ENCODE measurements at regions of chr1 and their contacts with region 1.

Region 1: DNA sequence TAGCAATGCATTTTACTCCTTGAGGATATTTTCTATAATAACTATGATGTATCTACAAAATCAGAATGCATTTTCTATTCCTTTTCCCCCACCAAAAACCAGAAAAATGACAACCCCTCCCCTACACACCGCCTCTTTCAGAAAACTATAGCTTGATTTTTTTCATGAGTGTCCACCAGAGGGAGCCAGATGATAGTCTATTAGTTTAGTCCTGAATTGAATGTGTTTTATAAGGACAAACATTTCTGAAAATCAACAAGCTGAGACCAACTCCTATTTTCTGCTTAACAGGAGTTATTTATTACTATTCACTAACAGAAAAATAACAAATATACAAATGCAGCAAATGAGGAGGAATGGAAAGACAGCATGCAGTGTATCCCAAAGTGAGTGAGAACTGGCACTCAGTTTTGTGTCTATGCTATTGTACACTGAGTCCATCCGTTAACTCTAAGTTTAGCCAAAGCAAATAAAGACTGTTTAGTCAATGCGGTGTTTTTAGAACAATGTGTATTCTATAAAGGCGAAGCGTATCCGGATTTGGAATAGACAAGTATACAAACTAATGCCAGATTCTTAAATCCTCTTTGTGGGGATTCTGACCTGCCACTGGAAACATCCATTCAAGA is 182.6 kb downstream of the VAV3 start:
- DNase-seq: peak in 1 of 2 donors; percentile 86
- ATAC-seq: peak in 1 of 3 donors; percentile 45
- H3K4me3 ChIP-seq: no peak overlapping the region
- H3K4me3 Mint-ChIP-seq: no peak overlapping the region
- H3K27ac ChIP-seq: no peak overlapping the region
- H3K27ac Mint-ChIP-seq: peak overlapping the region; percentile 91 to 92
- H3K4me1 ChIP-seq: peaks cover 18% of the 10 kb centered on the region
- H3K4me1 Mint-ChIP-seq: peaks cover 50 to 55% of the 10 kb centered on the region in 2 donors
- H3K27me3 ChIP-seq: no peaks in the 10 kb centered on the region
- H3K27me3 Mint-ChIP-seq: no peaks in the 10 kb centered on the region
- CTCF ChIP-seq: peak; percentile 95

Region 2: GRCh38 chr1:107820805-107821204 is 38.5 kb after region 1 on chr1:
- intact Hi-C with region 1: loop called (anchors 1 kb)
- DNase-seq: no peak
- ATAC-seq: peak in 2 of 3 donors; percentile 57 to 61
- H3K4me3 ChIP-seq: no peak overlapping the region
- H3K4me3 Mint-ChIP-seq: peak overlapping the region; percentile 36
- H3K27ac ChIP-seq: peak overlapping the region; percentile 31
- H3K27ac Mint-ChIP-seq: peak overlapping the region; percentile 81 to 90
- H3K4me1 ChIP-seq: peaks cover 16% of the 10 kb centered on the region
- H3K4me1 Mint-ChIP-seq: peaks cover 67 to 68% of the 10 kb centered on the region in 2 donors
- H3K27me3 ChIP-seq: no peaks in the 10 kb centered on the region
- H3K27me3 Mint-ChIP-seq: no peaks in the 10 kb centered on the region
- CTCF ChIP-seq: no peak

Region 3: GRCh38 chr1:107870696-107871095 is 88.4 kb after region 1 on chr1:
- intact Hi-C with region 1: loop called (anchors 2 kb)
- DNase-seq: no peak
- ATAC-seq: peak in 1 of 3 donors; percentile 52
- H3K4me3 ChIP-seq: no peak overlapping the region
- H3K4me3 Mint-ChIP-seq: peak overlapping the region; percentile 49
- H3K27ac ChIP-seq: peak overlapping the region; percentile 76
- H3K27ac Mint-ChIP-seq: peak overlapping the region; percentile 89 to 91
- H3K4me1 ChIP-seq: peaks cover 30% of the 10 kb centered on the region
- H3K4me1 Mint-ChIP-seq: peaks cover 70 to 87% of the 10 kb centered on the region in 2 donors
- H3K27me3 ChIP-seq: no peaks in the 10 kb centered on the region
- H3K27me3 Mint-ChIP-seq: no peaks in the 10 kb centered on the region
- CTCF ChIP-seq: no peak

Region 4: DNA sequence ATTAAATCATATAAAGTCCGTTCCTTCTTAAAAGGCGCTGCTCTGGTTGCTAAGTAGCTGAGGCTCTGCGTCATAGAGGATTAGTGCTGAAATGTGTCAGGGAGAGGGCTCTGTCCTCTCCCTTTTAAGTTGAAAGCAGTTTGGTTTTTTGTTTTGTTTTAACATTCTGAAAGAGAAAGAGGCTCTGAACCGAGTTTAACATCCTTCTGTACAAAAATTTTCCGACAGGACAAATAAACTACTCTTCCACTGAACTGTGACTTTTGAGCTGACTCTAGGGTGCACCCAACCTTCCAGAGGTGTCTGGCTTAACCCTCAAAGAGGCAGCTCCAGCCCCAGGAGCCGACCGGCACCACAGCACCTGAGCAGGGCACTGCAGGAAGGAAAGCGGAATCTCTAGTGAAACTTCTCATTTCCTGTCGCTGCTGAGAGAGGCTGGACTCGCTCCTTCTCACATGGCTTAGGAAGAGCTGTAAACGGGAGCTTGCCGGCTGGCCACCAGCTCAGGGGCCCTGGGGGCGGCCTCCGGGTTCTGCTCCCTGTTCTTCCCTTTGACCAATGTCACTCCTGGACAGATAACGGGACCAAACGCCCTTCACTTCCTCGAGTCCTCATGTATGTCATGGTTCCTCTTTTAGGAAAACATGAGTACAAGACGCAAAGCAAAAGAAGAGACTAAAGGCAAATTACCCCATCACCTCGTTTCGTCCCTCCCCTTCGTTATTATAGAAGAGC is 181.4 kb after region 1 on chr1:
- intact Hi-C with region 1: loop called (anchors 1 kb)
- DNase-seq: peak; percentile 47 to 75
- ATAC-seq: peak; percentile 69 to 82 (median 70)
- H3K4me3 ChIP-seq: peak overlapping the region; percentile 84
- H3K4me3 Mint-ChIP-seq: peak overlapping the region; percentile 98
- H3K27ac ChIP-seq: peak overlapping the region; percentile 83
- H3K27ac Mint-ChIP-seq: peak overlapping the region; percentile 95 to 97
- H3K4me1 ChIP-seq: peaks cover 18% of the 10 kb centered on the region
- H3K4me1 Mint-ChIP-seq: peaks cover 47 to 55% of the 10 kb centered on the region in 2 donors
- H3K27me3 ChIP-seq: no peaks in the 10 kb centered on the region
- H3K27me3 Mint-ChIP-seq: no peaks in the 10 kb centered on the region
- CTCF ChIP-seq: no peak

Region 5: DNA sequence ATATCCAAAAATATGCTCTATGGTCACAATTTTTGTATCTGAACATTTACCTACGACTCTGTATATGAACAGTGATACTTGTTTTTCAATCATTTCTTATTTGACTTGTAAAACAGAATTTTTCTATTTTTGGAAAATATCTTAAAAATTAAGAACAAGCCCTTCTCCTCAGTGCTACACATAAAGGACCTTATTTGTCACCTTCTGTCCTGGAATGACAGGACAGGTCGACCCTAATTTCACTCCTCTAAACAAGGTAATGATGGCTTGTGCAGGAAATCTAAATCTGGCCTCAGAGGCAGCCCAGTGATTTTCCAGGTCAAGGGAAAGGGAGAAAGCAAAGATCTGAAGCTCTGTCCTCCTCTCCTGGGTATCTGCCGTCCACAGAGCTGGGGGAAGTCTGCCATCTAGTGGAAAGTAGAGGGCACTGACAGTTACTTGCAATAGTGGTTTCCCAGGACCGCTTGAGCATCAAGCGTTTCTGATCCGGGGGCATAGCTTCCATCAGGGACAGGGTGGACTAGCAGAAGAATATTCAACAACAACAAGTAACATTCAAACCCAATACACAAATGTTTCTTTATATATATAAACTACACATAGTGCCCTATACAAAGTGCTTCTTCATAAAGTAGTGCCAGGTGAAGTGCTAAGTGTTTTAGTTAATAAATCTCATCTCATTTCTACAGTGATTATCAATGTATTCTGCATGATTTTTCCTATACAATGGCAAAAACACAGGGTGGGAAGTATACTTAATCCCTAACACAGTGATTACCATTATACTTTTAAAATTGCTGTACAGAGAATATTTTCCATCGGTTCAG is 343.2 kb after region 1 on chr1:
- intact Hi-C with region 1: loop called (anchors 1 kb)
- DNase-seq: peak; percentile 48 to 88
- ATAC-seq: peak; percentile 91 to 100 (median 99)
- H3K4me3 ChIP-seq: no peak overlapping the region
- H3K4me3 Mint-ChIP-seq: no peak overlapping the region
- H3K27ac ChIP-seq: no peak overlapping the region
- H3K27ac Mint-ChIP-seq: peak overlapping the region; percentile 36 to 54
- H3K4me1 ChIP-seq: peaks cover 4% of the 10 kb centered on the region
- H3K4me1 Mint-ChIP-seq: peaks cover 20% of the 10 kb centered on the region in 2 donors
- H3K27me3 ChIP-seq: no peaks in the 10 kb centered on the region
- H3K27me3 Mint-ChIP-seq: no peaks in the 10 kb centered on the region
- CTCF ChIP-seq: peak; percentile 95